ENCODE measurements at regions of chr1 and their contacts with region 1.

Region 1: GRCh38 chr1:212665241-212666115 is 34.2 kb downstream of the BATF3 start:
- DNase-seq: no peak
- ATAC-seq: peak; percentile 98
- H3K4me3 ChIP-seq: peak overlapping the region; percentile 64
- H3K27ac ChIP-seq: peak overlapping the region; percentile 33; the same call in 1 of the 2 replicates
- H3K4me1 ChIP-seq: peaks cover 24% of the 10 kb centered on the region
- H3K27me3 ChIP-seq: no peaks in the 10 kb centered on the region
- CTCF ChIP-seq: peak; percentile 90 to 98 (median 94)
- EP300 ChIP-seq: no peak
- POLR2A ChIP-seq: no peak
- RAD21 ChIP-seq: peak; percentile 94

Region 2: GRCh38 chr1:212651521-212651920 is 14.0 kb before region 1 on chr1:
- CTCF ChIA-PET with region 1: interaction called, 12 read pairs
- POLR2A ChIA-PET with region 1: no interaction called
- RAD21 ChIA-PET with region 1: interaction called, 6 read pairs
- SMC1A ChIA-PET with region 1: interaction called, 6 read pairs
- in situ Hi-C with region 1: no loop called
- intact Hi-C with region 1: no loop called
- DNase-seq: no peak
- ATAC-seq: no peak
- H3K4me3 ChIP-seq: no peak overlapping the region
- H3K27ac ChIP-seq: no peak overlapping the region
- H3K4me1 ChIP-seq: peaks cover 5% of the 10 kb centered on the region
- H3K27me3 ChIP-seq: no peaks in the 10 kb centered on the region
- CTCF ChIP-seq: no peak
- EP300 ChIP-seq: no peak
- POLR2A ChIP-seq: no peak
- RAD21 ChIP-seq: no peak

Region 3: DNA sequence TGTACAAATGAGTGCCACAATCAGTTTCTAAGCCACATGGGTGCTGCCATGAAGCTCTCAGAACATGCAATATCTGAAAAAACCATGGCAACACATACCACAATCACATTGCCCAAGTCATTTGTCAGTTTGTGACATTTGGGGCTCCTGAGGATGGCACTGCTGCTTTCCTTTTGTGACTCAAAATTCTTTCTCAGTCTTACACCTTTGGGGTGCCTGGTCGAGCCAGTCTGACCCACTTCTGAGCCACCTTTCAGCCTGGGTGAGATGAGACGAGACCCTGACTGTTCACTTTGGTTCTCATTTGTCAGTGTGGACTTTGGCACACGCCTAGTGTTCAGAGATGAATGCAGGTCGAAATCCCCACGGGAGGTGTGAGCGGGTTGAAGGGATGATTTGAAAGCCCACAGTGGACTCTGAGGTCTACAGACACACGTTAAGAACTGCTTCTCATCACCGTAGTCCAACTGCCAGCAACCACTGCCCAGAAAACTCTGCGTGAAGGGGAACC is 26.1 kb after region 1 on chr1:
- CTCF ChIA-PET with region 1: interaction called, 91 read pairs
- POLR2A ChIA-PET with region 1: interaction called, 3 read pairs
- RAD21 ChIA-PET with region 1: interaction called, 47 read pairs
- SMC1A ChIA-PET with region 1: interaction called, 64 read pairs
- in situ Hi-C with region 1: no loop called
- intact Hi-C with region 1: no loop called
- DNase-seq: peak; percentile 60
- ATAC-seq: peak; percentile 93
- H3K4me3 ChIP-seq: no peak overlapping the region; the same call in 1 of the 2 replicates
- H3K27ac ChIP-seq: no peak overlapping the region
- H3K4me1 ChIP-seq: peaks cover 7% of the 10 kb centered on the region
- H3K27me3 ChIP-seq: no peaks in the 10 kb centered on the region
- CTCF ChIP-seq: no peak
- EP300 ChIP-seq: no peak
- POLR2A ChIP-seq: no peak
- RAD21 ChIP-seq: no peak

Region 4: GRCh38 chr1:212749821-212750535 is 84.5 kb after region 1 on chr1:
- CTCF ChIA-PET with region 1: interaction called, 56 read pairs
- POLR2A ChIA-PET with region 1: interaction called, 4 read pairs
- RAD21 ChIA-PET with region 1: interaction called, 19 read pairs
- SMC1A ChIA-PET with region 1: interaction called, 24 read pairs
- in situ Hi-C with region 1: no loop called
- intact Hi-C with region 1: no loop called
- DNase-seq: peak; percentile 51
- ATAC-seq: peak; percentile 65
- H3K4me3 ChIP-seq: peak overlapping the region; percentile 32; the same call in 1 of the 2 replicates
- H3K27ac ChIP-seq: peak overlapping the region; percentile 59
- H3K4me1 ChIP-seq: peaks cover 41% of the 10 kb centered on the region
- H3K27me3 ChIP-seq: no peaks in the 10 kb centered on the region
- CTCF ChIP-seq: peak; percentile 52 to 69 (median 53); a peak in 5 of 6 replicates
- EP300 ChIP-seq: no peak; a peak in 1 of 4 replicates
- POLR2A ChIP-seq: no peak
- RAD21 ChIP-seq: peak; percentile 47

Region 5: DNA sequence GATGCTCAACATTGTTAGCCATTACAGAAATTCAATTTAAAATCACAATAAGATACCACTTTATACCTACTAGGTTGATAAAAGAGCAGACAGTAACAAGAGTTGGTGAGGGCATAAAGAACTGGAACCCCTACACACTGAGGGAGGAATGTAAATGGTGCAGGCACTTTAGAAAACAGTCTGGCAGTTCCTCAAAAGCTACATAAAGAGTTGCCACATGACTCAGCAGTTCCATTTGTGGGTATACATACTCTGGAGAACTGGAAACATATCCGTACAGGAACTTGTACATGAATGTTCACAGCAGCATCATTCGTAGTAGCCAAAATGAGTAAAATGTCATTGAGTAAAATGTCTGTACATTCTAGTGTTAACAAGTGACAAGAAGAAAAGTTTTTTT is 109.1 kb after region 1 on chr1:
- CTCF ChIA-PET with region 1: interaction called, 23 read pairs
- POLR2A ChIA-PET with region 1: no interaction called
- RAD21 ChIA-PET with region 1: interaction called, 6 read pairs
- SMC1A ChIA-PET with region 1: interaction called, 11 read pairs
- in situ Hi-C with region 1: no loop called
- intact Hi-C with region 1: no loop called
- DNase-seq: no peak
- ATAC-seq: peak; percentile 53
- H3K4me3 ChIP-seq: no peak overlapping the region
- H3K27ac ChIP-seq: no peak overlapping the region
- H3K4me1 ChIP-seq: peaks cover 4% of the 10 kb centered on the region; the same call in 1 of the 2 replicates
- H3K27me3 ChIP-seq: no peaks in the 10 kb centered on the region
- CTCF ChIP-seq: no peak
- EP300 ChIP-seq: no peak
- POLR2A ChIP-seq: no peak
- RAD21 ChIP-seq: no peak

Region 6: DNA sequence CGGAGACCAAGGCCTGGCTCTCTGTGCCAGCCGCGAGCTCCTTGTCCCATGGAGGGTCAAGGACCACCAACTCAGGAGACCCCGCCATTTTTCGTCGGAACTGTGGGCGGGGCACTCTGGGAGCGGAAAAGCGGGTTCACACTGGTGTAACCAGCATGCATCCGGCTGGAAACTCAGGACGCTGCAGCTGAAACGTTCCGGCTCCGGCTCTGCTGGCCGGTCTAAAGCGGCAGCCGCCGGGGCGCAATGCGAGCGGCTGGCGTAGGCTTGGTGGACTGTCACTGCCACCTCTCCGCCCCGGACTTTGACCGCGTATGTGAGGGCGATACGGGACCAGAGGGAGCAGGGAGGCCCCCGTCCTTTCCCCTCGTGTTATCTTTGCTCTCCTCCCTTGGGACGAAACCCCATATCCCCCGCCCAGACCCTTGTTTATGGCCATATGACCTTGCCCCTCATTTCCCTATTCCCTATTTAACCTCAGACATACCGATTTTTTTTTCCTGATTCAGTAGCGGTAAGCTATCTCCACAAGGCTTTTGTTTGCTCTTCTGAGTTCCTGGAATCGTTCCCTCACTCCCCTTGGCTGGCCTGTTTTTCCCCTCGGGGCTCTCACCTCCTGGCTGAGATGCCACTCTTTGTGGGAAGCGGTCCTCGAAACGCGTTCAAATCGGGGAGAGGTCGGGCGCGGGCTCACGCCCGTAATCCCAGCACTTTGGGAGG is 126.4 kb after region 1 on chr1 and contains the starts of genes NSL1 and TATDN3:
- CTCF ChIA-PET with region 1: interaction called, 10 read pairs
- POLR2A ChIA-PET with region 1: no interaction called
- RAD21 ChIA-PET with region 1: interaction called, 21 read pairs
- SMC1A ChIA-PET with region 1: interaction called, 10 read pairs
- in situ Hi-C with region 1: no loop called
- intact Hi-C with region 1: no loop called
- DNase-seq: peak; percentile 90
- ATAC-seq: peak; percentile 83
- H3K4me3 ChIP-seq: peak within 1 kb of the TSS; percentile 78
- H3K27ac ChIP-seq: peak within 1 kb of the TSS; percentile 97
- H3K4me1 ChIP-seq: peaks cover 8% of the 10 kb centered on the region
- H3K27me3 ChIP-seq: no peaks in the 10 kb centered on the region
- CTCF ChIP-seq: no peak
- EP300 ChIP-seq: no peak
- POLR2A ChIP-seq: peak; percentile 99
- RAD21 ChIP-seq: no peak
- polyA plus RNA-seq, gene NSL1: 46.5 to 67.2 TPM
- polyA plus RNA-seq, gene TATDN3: 34.0 to 40.0 TPM

Region 7: GRCh38 chr1:213061263-213061662 is 395.8 kb after region 1 on chr1:
- CTCF ChIA-PET with region 1: no interaction called
- POLR2A ChIA-PET with region 1: no interaction called
- RAD21 ChIA-PET with region 1: no interaction called
- SMC1A ChIA-PET with region 1: no interaction called
- in situ Hi-C with region 1: no loop called
- intact Hi-C with region 1: loop called (anchors 10 kb)
- DNase-seq: no peak
- ATAC-seq: peak; percentile 71
- H3K4me3 ChIP-seq: no peak overlapping the region
- H3K27ac ChIP-seq: no peak overlapping the region
- H3K4me1 ChIP-seq: no peaks in the 10 kb centered on the region
- H3K27me3 ChIP-seq: no peaks in the 10 kb centered on the region
- CTCF ChIP-seq: peak in 2 of 3 experiments; percentile 9 to 20; a peak in 1 of 6 replicates
- EP300 ChIP-seq: no peak
- POLR2A ChIP-seq: no peak
- RAD21 ChIP-seq: peak; percentile 13; the same call in 1 of the 2 replicates

Measured in GM12878 (cell line).